ENCODE measurements at regions of chr7 and their contacts with region 1.

Region 1: GRCh38 chr7:99504603-99505323 is at the start of gene ZKSCAN5:
- H3K4me3 Mint-ChIP-seq: peak within 1 kb of the TSS; percentile 84
- H3K27ac Mint-ChIP-seq: peak within 1 kb of the TSS; percentile 93
- H3K4me1 Mint-ChIP-seq: peaks cover 16% of the 10 kb centered on the region
- H3K27me3 Mint-ChIP-seq: no peaks in the 10 kb centered on the region

Region 2: DNA sequence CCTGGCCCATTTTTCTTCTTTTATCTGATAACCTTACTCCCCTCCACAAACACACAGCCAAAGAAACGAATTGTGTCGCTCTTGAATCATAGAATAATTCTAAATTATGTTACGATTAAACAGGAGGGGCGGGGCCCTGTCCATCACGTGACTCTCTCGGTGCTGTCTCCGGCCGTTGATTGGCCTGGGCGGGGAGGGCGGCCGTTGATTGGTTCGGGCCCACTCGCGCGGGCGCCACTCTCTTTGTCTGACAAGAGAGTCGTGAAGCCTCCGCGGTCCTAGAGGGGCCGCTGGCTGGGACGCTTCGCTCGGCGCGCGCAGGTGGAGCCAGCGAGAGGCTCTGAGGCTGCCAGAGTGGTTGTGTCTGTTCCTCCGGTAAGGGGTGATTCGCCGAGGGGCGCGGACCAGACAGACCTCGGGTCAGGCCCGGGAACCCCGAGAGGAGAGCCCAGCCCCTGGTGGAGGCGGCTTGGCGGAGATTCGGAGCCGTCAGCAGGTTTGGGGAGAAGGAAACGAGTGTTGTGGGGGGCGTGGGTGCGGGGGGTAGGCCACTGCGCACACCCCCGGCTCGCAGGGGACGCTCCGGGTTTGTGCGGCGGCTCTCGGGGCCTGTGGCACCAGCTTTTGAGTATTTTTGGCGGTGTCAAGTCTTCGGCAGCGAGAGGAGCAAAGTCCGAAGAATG is 32.1 kb before region 1 on chr7 and contains the start of gene ZNF789:
- intact Hi-C with region 1: loop called (anchors 1 kb)
- H3K4me3 Mint-ChIP-seq: peak within 1 kb of the TSS; percentile 99
- H3K27ac Mint-ChIP-seq: peak within 1 kb of the TSS; percentile 91
- H3K4me1 Mint-ChIP-seq: peaks cover 32% of the 10 kb centered on the region
- H3K27me3 Mint-ChIP-seq: peaks cover 23% of the 10 kb centered on the region

Region 3: GRCh38 chr7:99558306-99559174 is 53.8 kb after region 1 on chr7 and contains the start of gene ZNF655:
- intact Hi-C with region 1: loop called (anchors 2 kb)
- H3K4me3 Mint-ChIP-seq: peak within 1 kb of the TSS; percentile 96
- H3K27ac Mint-ChIP-seq: peak within 1 kb of the TSS; percentile 93
- H3K4me1 Mint-ChIP-seq: peaks cover 47% of the 10 kb centered on the region
- H3K27me3 Mint-ChIP-seq: no peaks in the 10 kb centered on the region

Region 4: GRCh38 chr7:99616359-99617191 is 111.8 kb after region 1 on chr7 and contains the start of gene ZSCAN25:
- intact Hi-C with region 1: loop called (anchors 10 kb)
- H3K4me3 Mint-ChIP-seq: peak within 1 kb of the TSS; percentile 92
- H3K27ac Mint-ChIP-seq: peak within 1 kb of the TSS; percentile 94
- H3K4me1 Mint-ChIP-seq: peaks cover 54% of the 10 kb centered on the region
- H3K27me3 Mint-ChIP-seq: peaks cover 18% of the 10 kb centered on the region

Measured in dendritic cell treated with granulocyte-macrophage colony-stimulating factor and Interleukin-4, amounts not matched to agents 40 ng/mL and 50 ng/mL, for 4 days (primary cell).